ENCODE measurements at regions of chr17 and their contacts with region 1.

Region 1: GRCh38 chr17:68972119-68972704 is 17.0 kb upstream of the ABCA8 start:
- DNase-seq: peak; percentile 15
- ATAC-seq: peak; percentile 70
- H3K4me3 ChIP-seq: no peak overlapping the region
- H3K27ac ChIP-seq: no peak overlapping the region
- H3K4me1 ChIP-seq: no peaks in the 10 kb centered on the region
- H3K27me3 ChIP-seq: no peaks in the 10 kb centered on the region
- CTCF ChIP-seq: peak; percentile 77 to 92 (median 80)
- POLR2A ChIP-seq: no peak
- RAD21 ChIP-seq: peak; percentile 90

Region 2: GRCh38 chr17:68334401-68334800 is 637.8 kb before region 1 on chr17:
- CTCF ChIA-PET with region 1: no interaction called
- POLR2A ChIA-PET with region 1: no interaction called
- RAD21 ChIA-PET with region 1: no interaction called
- intact Hi-C with region 1: no loop called
- DNase-seq: no peak
- ATAC-seq: no peak
- H3K4me3 ChIP-seq: no peak overlapping the region
- H3K27ac ChIP-seq: no peak overlapping the region
- H3K4me1 ChIP-seq: peaks cover 0 to 5% of the 10 kb centered on the region in 2 experiments; a peak in 2 of 4 replicates
- H3K27me3 ChIP-seq: no peaks in the 10 kb centered on the region
- CTCF ChIP-seq: no peak
- POLR2A ChIP-seq: no peak
- RAD21 ChIP-seq: no peak

Region 3: GRCh38 chr17:68771867-68772515 is 200.2 kb before region 1 on chr17:
- CTCF ChIA-PET with region 1: interaction called, 12 read pairs
- POLR2A ChIA-PET with region 1: no interaction called
- RAD21 ChIA-PET with region 1: interaction called in 1 of 2 experiments, 3 read pairs
- intact Hi-C with region 1: loop called (anchors 1 kb)
- DNase-seq: peak; percentile 62
- ATAC-seq: peak; percentile 67
- H3K4me3 ChIP-seq: peak overlapping the region; percentile 4 to 10; a peak in 1 of 4 replicates
- H3K27ac ChIP-seq: no peak overlapping the region
- H3K4me1 ChIP-seq: peaks cover 4 to 9% of the 10 kb centered on the region in 2 experiments; a peak in 3 of 4 replicates
- H3K27me3 ChIP-seq: no peaks in the 10 kb centered on the region
- CTCF ChIP-seq: peak; percentile 65 to 84 (median 78)
- POLR2A ChIP-seq: no peak
- RAD21 ChIP-seq: peak; percentile 77

Region 4: GRCh38 chr17:68777243-68777855 is 194.9 kb before region 1 on chr17:
- CTCF ChIA-PET with region 1: interaction called, 12 read pairs
- POLR2A ChIA-PET with region 1: no interaction called
- RAD21 ChIA-PET with region 1: interaction called in 1 of 2 experiments, 3 read pairs
- intact Hi-C with region 1: loop called (anchors 1 kb)
- DNase-seq: peak; percentile 51
- ATAC-seq: peak; percentile 46
- H3K4me3 ChIP-seq: no peak overlapping the region
- H3K27ac ChIP-seq: no peak overlapping the region
- H3K4me1 ChIP-seq: peaks cover 4 to 9% of the 10 kb centered on the region in 2 experiments; a peak in 3 of 4 replicates
- H3K27me3 ChIP-seq: no peaks in the 10 kb centered on the region
- CTCF ChIP-seq: peak; percentile 77 to 95 (median 87)
- POLR2A ChIP-seq: no peak
- RAD21 ChIP-seq: peak; percentile 94

Region 5: GRCh38 chr17:68794636-68795434 is 177.4 kb before region 1 on chr17:
- CTCF ChIA-PET with region 1: no interaction called
- POLR2A ChIA-PET with region 1: no interaction called
- RAD21 ChIA-PET with region 1: no interaction called
- intact Hi-C with region 1: loop called (anchors 1 kb)
- DNase-seq: no peak
- ATAC-seq: peak; percentile 83
- H3K4me3 ChIP-seq: no peak overlapping the region
- H3K27ac ChIP-seq: no peak overlapping the region
- H3K4me1 ChIP-seq: peaks cover 0 to 4% of the 10 kb centered on the region in 2 experiments; a peak in 2 of 4 replicates
- H3K27me3 ChIP-seq: no peaks in the 10 kb centered on the region
- CTCF ChIP-seq: peak; percentile 49 to 82 (median 64); a peak in 4 of 6 replicates
- POLR2A ChIP-seq: no peak
- RAD21 ChIP-seq: peak; percentile 82

Region 6: DNA sequence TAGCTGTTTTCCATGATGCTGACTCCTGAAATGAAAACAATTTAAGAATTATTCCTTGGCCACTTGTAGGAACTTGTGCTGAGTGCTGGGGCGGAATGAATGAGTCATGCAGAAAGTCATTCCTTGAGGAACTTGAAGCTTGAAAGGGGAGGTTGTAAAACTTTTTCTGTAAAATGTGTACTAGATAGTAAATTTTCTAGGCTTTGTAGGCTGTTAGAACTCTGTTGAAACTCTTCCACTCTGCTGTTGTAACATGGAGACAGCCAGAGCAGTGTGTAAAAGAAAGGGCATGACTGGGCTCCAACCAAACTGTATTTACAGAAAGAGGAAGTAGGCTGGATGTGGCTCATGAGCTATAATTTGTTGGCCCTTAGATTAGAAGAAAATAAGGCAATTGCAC is 63.1 kb before region 1 on chr17:
- CTCF ChIA-PET with region 1: interaction called, 3 read pairs
- POLR2A ChIA-PET with region 1: no interaction called
- RAD21 ChIA-PET with region 1: no interaction called
- intact Hi-C with region 1: loop called (anchors 5 kb)
- DNase-seq: peak; percentile 80
- ATAC-seq: peak; percentile 68
- H3K4me3 ChIP-seq: peak overlapping the region in 1 of 2 experiments; percentile 4; a peak in 2 of 4 replicates
- H3K27ac ChIP-seq: peak overlapping the region; percentile 47; the same call in 1 of the 2 replicates
- H3K4me1 ChIP-seq: peaks cover 6 to 25% of the 10 kb centered on the region in 2 experiments; a peak in 3 of 4 replicates
- H3K27me3 ChIP-seq: no peaks in the 10 kb centered on the region
- CTCF ChIP-seq: no peak
- POLR2A ChIP-seq: no peak
- RAD21 ChIP-seq: 0 out of 2 replicates have a peak, but pooled peaks have one; percentile 12

Region 7: GRCh38 chr17:68993112-68993511 is 20.9 kb after region 1 on chr17:
- CTCF ChIA-PET with region 1: no interaction called
- POLR2A ChIA-PET with region 1: no interaction called
- RAD21 ChIA-PET with region 1: no interaction called
- intact Hi-C with region 1: loop called (anchors 2 kb)
- DNase-seq: no peak
- ATAC-seq: no peak
- H3K4me3 ChIP-seq: no peak overlapping the region
- H3K27ac ChIP-seq: no peak overlapping the region
- H3K4me1 ChIP-seq: no peaks in the 10 kb centered on the region
- H3K27me3 ChIP-seq: no peaks in the 10 kb centered on the region
- CTCF ChIP-seq: no peak
- POLR2A ChIP-seq: no peak
- RAD21 ChIP-seq: no peak

Region 8: DNA sequence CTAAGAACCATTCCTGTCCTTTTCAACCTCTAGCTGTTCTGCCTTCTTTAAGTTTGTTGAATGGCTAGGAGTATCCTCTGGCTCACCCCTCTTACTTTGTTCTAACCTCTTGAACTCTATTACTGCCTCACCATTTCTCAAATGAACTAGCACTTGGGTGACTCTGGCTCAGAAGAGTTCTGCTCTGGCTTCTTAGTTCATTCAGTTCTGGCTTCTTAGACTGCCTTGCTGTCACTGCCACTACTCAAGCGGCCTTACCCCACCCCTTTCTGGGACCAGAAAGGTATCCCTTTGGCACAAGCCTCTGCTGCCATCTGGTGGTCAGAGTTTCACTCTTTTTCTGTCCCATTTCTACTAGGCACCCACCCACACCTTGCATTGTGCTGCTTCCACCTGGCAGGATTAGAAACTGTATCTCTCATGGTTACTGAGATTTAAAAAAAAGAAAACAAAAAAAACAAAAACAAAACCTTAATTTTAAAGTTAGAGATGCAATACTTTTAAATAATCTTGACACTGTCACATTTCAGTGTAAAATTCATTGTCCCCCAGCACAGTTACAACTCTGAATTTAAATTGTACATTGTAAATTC is 263.2 kb after region 1 on chr17:
- CTCF ChIA-PET with region 1: interaction called, 3 read pairs
- POLR2A ChIA-PET with region 1: no interaction called
- RAD21 ChIA-PET with region 1: no interaction called
- intact Hi-C with region 1: loop called (anchors 1 kb)
- DNase-seq: peak; percentile 89
- ATAC-seq: peak; percentile 99
- H3K4me3 ChIP-seq: no peak overlapping the region
- H3K27ac ChIP-seq: no peak overlapping the region
- H3K4me1 ChIP-seq: 0 out of 4 replicates have a peak, but pooled peaks cover 0 to 3% of the 10 kb centered on the region in 2 experiments
- H3K27me3 ChIP-seq: no peaks in the 10 kb centered on the region
- CTCF ChIP-seq: peak; percentile 82 to 97 (median 97)
- POLR2A ChIP-seq: no peak
- RAD21 ChIP-seq: peak; percentile 98